ENCODE measurements at regions of chr1 and their contacts with region 1.

Region 1: DNA sequence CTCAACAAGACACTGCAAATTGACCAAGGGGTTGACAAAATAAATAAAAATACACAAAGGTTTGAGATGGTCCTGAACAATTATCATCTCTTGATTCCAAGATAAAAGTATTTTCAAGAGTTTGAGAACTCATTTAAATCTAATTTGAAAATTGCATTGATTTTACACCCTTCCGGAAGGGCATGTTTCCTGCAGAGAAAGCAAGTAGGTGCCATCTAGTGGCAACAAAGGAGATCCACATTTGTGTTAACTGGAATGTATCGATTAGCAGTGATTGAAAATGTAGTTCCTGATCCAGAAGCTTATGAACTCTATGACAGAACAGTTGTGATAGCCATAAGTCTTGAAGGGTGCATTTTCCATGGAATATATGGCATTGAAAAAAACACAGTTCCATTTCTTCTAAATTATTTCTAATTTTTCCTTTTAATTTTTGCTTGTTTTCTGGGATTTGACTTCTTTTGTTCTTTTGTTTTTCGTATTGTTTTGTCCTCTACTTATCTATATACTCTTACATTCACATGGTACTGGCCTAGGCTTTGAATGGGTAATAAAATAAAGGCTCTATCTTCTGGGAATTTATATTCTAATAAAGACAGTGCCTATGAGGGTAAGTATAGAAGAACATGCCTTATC is 143.7 kb downstream of the DNM3 start:
- DNase-seq: peak; percentile 19
- H3K4me3 ChIP-seq: no peak overlapping the region
- H3K27ac ChIP-seq: no peak overlapping the region
- H3K4me1 ChIP-seq: no peaks in the 10 kb centered on the region; a peak in 1 of 4 replicates
- H3K27me3 ChIP-seq: no peaks in the 10 kb centered on the region; the same call in 1 of the 2 replicates
- CTCF ChIP-seq: peak; percentile 89
- EP300 ChIP-seq: no peak
- RAD21 ChIP-seq: peak; percentile 81

Region 2: DNA sequence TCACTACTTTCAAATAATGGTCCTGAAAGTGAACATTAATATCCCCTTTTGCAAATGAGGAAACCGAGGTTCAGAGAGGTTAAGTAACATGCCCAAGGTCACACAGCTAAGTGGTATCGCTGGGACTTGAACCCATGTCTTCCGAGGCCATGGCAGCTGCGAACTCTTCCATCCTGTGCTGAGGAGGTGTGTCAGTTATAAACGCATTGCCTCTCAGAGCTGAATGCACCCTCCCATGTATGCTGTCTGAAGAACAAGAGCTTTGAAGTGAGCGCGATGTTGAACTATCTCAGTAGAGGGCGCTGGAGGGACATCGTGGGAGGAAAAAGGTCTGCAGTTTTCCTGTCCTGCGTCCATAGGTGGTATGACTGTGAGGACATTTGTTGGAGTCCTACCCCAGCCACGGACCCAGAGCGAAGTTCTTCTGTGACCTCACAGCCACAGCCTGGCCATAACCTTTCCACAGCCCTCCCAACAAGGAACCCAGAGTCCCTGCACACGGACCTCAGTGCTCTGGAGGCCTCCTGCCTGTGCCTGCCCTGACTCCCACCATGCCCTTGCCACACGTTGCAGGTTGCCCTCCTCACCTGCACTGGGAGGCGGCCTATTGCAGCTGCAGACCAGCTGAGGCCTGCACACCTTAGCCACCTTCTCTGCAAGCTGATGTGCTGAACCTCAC is 340.0 kb before region 1 on chr1:
- CTCF ChIA-PET with region 1: interaction called, 41 read pairs
- POLR2A ChIA-PET with region 1: no interaction called
- DNase-seq: peak; percentile 67
- H3K4me3 ChIP-seq: no peak overlapping the region; a peak in 1 of 4 replicates
- H3K27ac ChIP-seq: no peak overlapping the region
- H3K4me1 ChIP-seq: peaks cover 0 to 13% of the 10 kb centered on the region in 2 experiments; a peak in 2 of 4 replicates
- H3K27me3 ChIP-seq: peaks cover 6% of the 10 kb centered on the region; the same call in 1 of the 2 replicates
- CTCF ChIP-seq: peak; percentile 75
- EP300 ChIP-seq: no peak
- RAD21 ChIP-seq: peak; percentile 87

Region 3: DNA sequence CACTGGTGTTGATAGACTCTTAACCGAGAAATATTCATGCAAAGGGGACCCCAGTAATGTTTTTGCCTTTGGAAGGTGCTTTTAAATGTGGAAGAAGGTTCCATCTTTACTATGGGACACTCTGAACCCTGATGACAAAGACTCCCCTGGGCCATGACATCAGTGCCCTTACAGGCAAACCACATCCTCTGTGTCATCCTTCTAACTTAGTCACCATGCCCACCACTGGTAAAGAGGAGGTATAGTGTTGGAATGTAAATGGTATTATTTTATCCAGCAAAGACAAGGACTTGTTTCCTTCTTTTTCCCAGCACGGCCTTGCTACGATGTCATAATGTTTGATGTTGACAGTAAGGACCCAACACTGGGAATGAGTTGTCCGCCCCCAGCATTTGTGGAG is 190.9 kb before region 1 on chr1:
- CTCF ChIA-PET with region 1: interaction called, 413 read pairs
- POLR2A ChIA-PET with region 1: no interaction called
- DNase-seq: no peak
- H3K4me3 ChIP-seq: no peak overlapping the region
- H3K27ac ChIP-seq: peak overlapping the region in 1 of 2 experiments; percentile 73; a peak in 2 of 4 replicates
- H3K4me1 ChIP-seq: peaks cover 0 to 9% of the 10 kb centered on the region in 2 experiments; a peak in 1 of 4 replicates
- H3K27me3 ChIP-seq: no peaks in the 10 kb centered on the region
- CTCF ChIP-seq: no peak
- EP300 ChIP-seq: no peak
- RAD21 ChIP-seq: no peak

Region 4: GRCh38 chr1:171817511-171818265 is 167.3 kb before region 1 on chr1:
- CTCF ChIA-PET with region 1: interaction called, 413 read pairs
- POLR2A ChIA-PET with region 1: no interaction called
- DNase-seq: peak; percentile 13
- H3K4me3 ChIP-seq: no peak overlapping the region
- H3K27ac ChIP-seq: peak overlapping the region in 1 of 2 experiments; percentile 23; a peak in 1 of 4 replicates
- H3K4me1 ChIP-seq: peaks cover 3 to 4% of the 10 kb centered on the region in 2 experiments; a peak in 2 of 4 replicates
- H3K27me3 ChIP-seq: no peaks in the 10 kb centered on the region
- CTCF ChIP-seq: no peak
- EP300 ChIP-seq: no peak
- RAD21 ChIP-seq: no peak

Region 5: DNA sequence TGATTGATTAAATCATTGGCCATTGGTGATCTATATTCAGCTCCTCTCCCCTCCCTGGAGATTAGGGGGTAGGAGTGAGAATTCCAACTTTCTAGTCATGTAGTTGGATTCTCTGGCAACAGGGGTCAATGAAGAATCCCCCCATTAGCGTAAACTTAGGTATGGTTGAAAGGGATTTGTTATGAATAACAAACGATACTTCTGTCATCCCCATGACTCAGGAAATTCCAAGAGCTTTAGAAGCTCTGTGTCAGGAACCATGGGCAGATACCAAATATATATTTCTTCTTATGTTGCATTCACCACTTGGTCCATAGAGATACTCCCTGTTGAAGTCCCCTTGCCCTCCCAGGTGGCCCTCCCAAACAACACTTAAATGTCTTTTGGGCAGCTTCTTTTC is 19.2 kb before region 1 on chr1:
- CTCF ChIA-PET with region 1: interaction called, 53 read pairs
- POLR2A ChIA-PET with region 1: no interaction called
- DNase-seq: no peak
- H3K4me3 ChIP-seq: no peak overlapping the region
- H3K27ac ChIP-seq: no peak overlapping the region
- H3K4me1 ChIP-seq: no peaks in the 10 kb centered on the region
- H3K27me3 ChIP-seq: no peaks in the 10 kb centered on the region
- CTCF ChIP-seq: no peak
- EP300 ChIP-seq: no peak
- RAD21 ChIP-seq: no peak

Region 6: DNA sequence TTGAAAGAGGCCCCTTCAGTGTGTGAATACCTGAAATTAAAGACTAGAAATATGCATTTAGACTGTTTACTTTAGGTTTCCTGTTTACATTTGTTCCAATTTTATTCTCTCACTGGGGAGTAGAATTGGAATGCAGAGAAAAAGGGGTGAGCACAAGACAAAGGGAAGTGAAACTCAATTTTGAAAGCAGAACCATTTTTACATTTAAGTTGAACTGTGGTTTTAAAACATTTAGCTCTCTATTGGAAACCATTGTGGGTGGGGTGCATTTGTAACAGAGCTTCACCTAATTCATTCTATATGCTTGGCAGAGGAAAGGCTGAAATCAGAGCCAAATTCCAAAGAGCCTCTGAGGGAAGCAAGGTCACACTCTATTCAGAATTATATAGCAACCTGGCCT is 200.2 kb after region 1 on chr1:
- CTCF ChIA-PET with region 1: no interaction called
- POLR2A ChIA-PET with region 1: no interaction called
- DNase-seq: no peak
- H3K4me3 ChIP-seq: no peak overlapping the region
- H3K27ac ChIP-seq: no peak overlapping the region; a peak in 1 of 4 replicates
- H3K4me1 ChIP-seq: peaks cover 16 to 31% of the 10 kb centered on the region in 2 experiments; a peak in 3 of 4 replicates
- H3K27me3 ChIP-seq: no peaks in the 10 kb centered on the region
- CTCF ChIP-seq: no peak
- EP300 ChIP-seq: no peak
- RAD21 ChIP-seq: no peak

Region 7: DNA sequence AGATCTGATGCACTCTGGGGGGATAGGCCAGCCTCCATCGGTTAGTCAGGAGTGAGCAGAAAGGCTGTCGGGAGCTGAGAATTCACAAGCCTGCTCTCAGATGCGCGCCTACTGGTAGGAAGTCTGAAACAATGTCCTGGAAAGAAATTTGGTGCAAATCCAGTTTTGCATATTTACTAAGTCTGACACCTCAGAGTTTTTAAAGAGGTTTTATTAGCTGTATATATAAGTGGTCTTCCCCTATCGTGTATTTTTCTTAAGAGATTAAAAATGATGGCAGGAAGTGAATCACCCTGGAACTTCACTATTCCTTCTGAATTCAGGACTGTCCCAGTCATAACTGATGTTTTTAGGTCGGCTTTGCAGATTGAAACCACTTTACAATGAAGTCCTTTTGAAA is 335.8 kb after region 1 on chr1:
- CTCF ChIA-PET with region 1: no interaction called
- POLR2A ChIA-PET with region 1: no interaction called
- DNase-seq: no peak
- H3K4me3 ChIP-seq: no peak overlapping the region
- H3K27ac ChIP-seq: peak overlapping the region; percentile 97
- H3K4me1 ChIP-seq: peaks cover 25 to 35% of the 10 kb centered on the region in 2 experiments; a peak in 3 of 4 replicates
- H3K27me3 ChIP-seq: no peaks in the 10 kb centered on the region
- CTCF ChIP-seq: peak; percentile 30; the same call in 1 of the 2 replicates
- EP300 ChIP-seq: peak in 1 of 2 experiments; percentile 60; a peak in 1 of 4 replicates
- RAD21 ChIP-seq: no peak

Region 8: GRCh38 chr1:172398970-172399755 is 414.2 kb after region 1 on chr1:
- CTCF ChIA-PET with region 1: interaction called, 12 read pairs
- POLR2A ChIA-PET with region 1: no interaction called
- DNase-seq: peak; percentile 29
- H3K4me3 ChIP-seq: peak overlapping the region in 1 of 2 experiments; percentile 1; a peak in 1 of 4 replicates
- H3K27ac ChIP-seq: peak overlapping the region; percentile 85 to 88
- H3K4me1 ChIP-seq: peaks cover 13 to 29% of the 10 kb centered on the region in 2 experiments
- H3K27me3 ChIP-seq: no peaks in the 10 kb centered on the region
- CTCF ChIP-seq: peak; percentile 82
- EP300 ChIP-seq: peak in 1 of 2 experiments; percentile 66; a peak in 1 of 4 replicates
- RAD21 ChIP-seq: peak; percentile 81